ENCODE measurements at regions of chr4 and their contacts with region 1.

Region 1: DNA sequence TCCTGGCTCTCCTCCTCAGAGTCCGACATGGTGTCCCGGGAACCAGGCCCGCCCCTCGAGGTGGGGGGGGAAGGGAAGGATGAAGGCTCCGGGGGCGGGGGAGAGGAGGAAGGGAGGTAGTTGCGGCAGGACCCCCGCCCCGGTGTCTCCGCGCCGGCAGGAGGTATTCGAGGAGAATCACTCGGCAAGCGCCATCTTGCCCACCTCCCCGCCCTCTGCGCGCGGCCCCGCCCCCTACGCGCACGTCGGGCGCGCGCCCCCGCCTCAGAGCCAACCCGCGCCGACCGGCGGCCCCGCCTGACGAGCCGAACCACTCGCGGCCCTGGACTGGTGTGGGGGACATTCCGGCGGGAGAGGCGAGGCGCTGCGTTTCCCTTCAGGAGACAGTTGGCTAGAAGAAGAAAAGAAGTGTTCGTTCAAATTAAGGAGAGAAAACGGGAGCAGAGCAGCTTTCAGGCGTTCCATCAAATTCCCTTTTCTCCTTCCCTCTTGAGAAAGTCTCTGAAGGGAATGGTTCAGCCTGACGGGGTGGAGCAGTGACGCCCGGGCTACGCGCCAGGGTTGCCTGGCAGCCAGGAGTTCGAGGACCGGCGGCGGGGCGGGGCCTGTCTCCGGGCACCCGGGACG is at the start of gene RAB28:
- DNase-seq: peak; percentile 94
- H3K4me3 Mint-ChIP-seq: peak within 1 kb of the TSS; percentile 84
- H3K27ac Mint-ChIP-seq: peak within 1 kb of the TSS; percentile 96
- H3K4me1 Mint-ChIP-seq: peaks cover 22% of the 10 kb centered on the region
- H3K27me3 Mint-ChIP-seq: peaks cover 13% of the 10 kb centered on the region
- total RNA-seq, gene RAB28: 16.5 to 18.8 TPM

Region 2: DNA sequence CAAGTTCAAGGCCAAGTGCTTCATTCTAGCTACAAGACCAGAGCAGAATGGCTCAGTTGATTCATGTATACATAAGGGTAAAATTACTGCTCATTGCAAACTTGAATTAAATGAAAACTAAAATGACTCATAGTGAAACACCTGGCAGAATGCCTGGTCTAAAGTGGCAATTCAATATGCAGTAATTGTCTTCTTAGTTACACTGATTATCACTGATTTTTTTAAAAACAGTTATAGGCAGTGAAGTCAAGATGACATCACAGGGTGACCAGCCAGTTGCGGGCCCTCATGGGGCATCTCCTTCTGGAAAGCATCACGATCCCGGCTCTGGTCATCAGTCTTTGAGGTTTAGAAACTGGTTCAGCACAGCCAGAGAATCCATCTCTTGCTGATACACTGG is 154.3 kb before region 1 on chr4:
- CTCF ChIA-PET with region 1: no interaction called
- POLR2A ChIA-PET with region 1: no interaction called
- intact Hi-C with region 1: no loop called
- DNase-seq: no peak
- H3K4me3 Mint-ChIP-seq: no peak overlapping the region
- H3K27ac Mint-ChIP-seq: no peak overlapping the region
- H3K4me1 Mint-ChIP-seq: no peaks in the 10 kb centered on the region
- H3K27me3 Mint-ChIP-seq: no peaks in the 10 kb centered on the region

Region 3: GRCh38 chr4:13527981-13528820 is 44.0 kb after region 1 on chr4:
- CTCF ChIA-PET with region 1: no interaction called
- POLR2A ChIA-PET with region 1: no interaction called
- intact Hi-C with region 1: loop called (anchors 2 kb)
- DNase-seq: peak; percentile 55
- H3K4me3 Mint-ChIP-seq: peak overlapping the region; percentile 47
- H3K27ac Mint-ChIP-seq: no peak overlapping the region
- H3K4me1 Mint-ChIP-seq: peaks cover 23% of the 10 kb centered on the region
- H3K27me3 Mint-ChIP-seq: peaks cover 81% of the 10 kb centered on the region

Region 4: GRCh38 chr4:13541720-13542576 is 57.7 kb after region 1 on chr4:
- CTCF ChIA-PET with region 1: no interaction called
- POLR2A ChIA-PET with region 1: no interaction called
- intact Hi-C with region 1: no loop called
- DNase-seq: peak; percentile 53
- H3K4me3 Mint-ChIP-seq: peak overlapping the region; percentile 16
- H3K27ac Mint-ChIP-seq: no peak overlapping the region
- H3K4me1 Mint-ChIP-seq: peaks cover 42% of the 10 kb centered on the region
- H3K27me3 Mint-ChIP-seq: peaks cover 73% of the 10 kb centered on the region

Region 5: DNA sequence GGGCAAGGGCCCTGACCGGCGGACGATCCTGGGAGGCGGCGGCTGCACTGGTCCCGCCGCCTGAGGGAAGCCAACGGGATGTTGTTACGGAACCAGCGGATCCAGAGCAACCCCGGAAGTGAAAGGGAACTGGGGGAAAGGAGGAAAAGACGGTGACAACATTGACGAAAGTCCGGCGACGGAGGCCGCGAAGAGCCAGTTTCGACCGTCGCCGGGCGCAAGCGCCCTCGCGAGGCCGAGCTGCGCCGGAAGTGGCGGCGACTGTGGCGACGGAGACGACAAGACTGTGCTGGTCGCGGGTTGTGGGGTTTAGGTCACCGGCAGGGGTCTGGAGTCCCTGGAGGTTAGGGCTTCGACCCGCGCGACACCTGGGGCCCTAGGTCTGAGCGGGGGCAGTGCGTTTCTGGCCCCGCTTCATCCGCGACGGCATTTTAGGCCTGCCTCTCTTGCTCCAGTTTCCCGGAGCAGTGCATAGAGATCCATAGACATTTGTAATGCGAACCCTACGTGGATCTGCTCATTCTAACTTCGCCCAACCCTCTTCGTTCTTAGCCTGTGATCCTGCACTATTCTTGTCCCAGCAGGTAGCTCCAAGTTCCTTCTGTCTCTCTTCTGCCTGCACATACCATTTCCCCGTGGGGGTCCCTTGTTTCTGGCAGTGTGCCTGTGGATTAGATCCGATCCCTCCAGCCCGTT is 143.5 kb after region 1 on chr4 and contains the start of gene BOD1L1:
- CTCF ChIA-PET with region 1: no interaction called
- POLR2A ChIA-PET with region 1: no interaction called
- intact Hi-C with region 1: loop called (anchors 5 kb)
- DNase-seq: peak; percentile 89
- H3K4me3 Mint-ChIP-seq: peak within 1 kb of the TSS; percentile 97
- H3K27ac Mint-ChIP-seq: peak within 1 kb of the TSS; percentile 94
- H3K4me1 Mint-ChIP-seq: peaks cover 41% of the 10 kb centered on the region
- H3K27me3 Mint-ChIP-seq: no peaks in the 10 kb centered on the region
- total RNA-seq, gene BOD1L1: 25.5 to 31.2 TPM

Region 6: GRCh38 chr4:13733817-13734216 is 249.6 kb after region 1 on chr4:
- CTCF ChIA-PET with region 1: no interaction called
- POLR2A ChIA-PET with region 1: no interaction called
- intact Hi-C with region 1: no loop called
- DNase-seq: no peak
- H3K4me3 Mint-ChIP-seq: no peak overlapping the region
- H3K27ac Mint-ChIP-seq: no peak overlapping the region
- H3K4me1 Mint-ChIP-seq: no peaks in the 10 kb centered on the region
- H3K27me3 Mint-ChIP-seq: no peaks in the 10 kb centered on the region